MCF 10A (cell line): ENCODE measurements at regions of chr12 and their contacts with region 1.

Region 1: DNA sequence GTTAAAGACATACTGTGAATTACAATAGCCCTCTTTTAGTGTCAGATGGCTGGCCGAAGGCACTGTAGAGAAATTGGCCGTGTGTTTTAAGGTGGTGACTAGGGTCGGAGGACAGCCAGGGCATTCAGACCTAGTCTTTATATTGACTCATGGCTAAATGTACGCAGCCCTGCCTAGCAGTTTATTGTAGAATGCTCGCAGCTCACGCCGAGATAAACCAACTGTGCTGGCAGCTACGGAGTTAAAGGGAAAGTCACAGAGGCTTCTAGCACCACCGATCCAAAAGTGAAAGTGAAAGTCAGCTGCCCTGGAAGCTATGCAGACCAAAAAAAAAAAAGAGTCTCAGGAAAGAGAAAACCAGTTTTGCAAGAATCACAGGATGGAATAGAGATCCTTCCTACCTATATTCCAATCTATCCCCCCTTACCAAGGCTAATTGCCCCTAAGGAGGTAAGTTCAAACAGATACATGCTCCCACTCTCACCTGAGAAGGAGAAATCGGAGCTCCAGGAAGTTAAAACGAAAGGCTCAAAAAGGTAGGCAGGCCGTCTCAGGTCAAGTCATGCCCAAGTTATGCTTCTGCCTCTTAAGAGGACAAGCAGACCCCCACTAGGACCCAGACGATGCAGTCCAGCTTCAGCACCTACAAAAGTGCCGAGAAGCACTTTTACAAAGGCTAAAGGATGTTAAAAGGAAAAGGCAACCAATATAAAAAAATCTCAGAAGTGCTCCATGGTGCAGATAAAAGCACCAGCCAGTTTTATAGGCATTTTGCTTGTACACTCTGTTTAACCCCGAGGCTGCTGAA is 24.8 kb downstream of the KLRK1 start:
- DNase-seq: peak; percentile 83
- H3K4me3 Mint-ChIP-seq: no peak overlapping the region
- H3K27ac Mint-ChIP-seq: no peak overlapping the region
- H3K4me1 Mint-ChIP-seq: peaks cover 22% of the 10 kb centered on the region
- H3K27me3 Mint-ChIP-seq: no peaks in the 10 kb centered on the region
- CTCF ChIP-seq: no peak

Region 2: DNA sequence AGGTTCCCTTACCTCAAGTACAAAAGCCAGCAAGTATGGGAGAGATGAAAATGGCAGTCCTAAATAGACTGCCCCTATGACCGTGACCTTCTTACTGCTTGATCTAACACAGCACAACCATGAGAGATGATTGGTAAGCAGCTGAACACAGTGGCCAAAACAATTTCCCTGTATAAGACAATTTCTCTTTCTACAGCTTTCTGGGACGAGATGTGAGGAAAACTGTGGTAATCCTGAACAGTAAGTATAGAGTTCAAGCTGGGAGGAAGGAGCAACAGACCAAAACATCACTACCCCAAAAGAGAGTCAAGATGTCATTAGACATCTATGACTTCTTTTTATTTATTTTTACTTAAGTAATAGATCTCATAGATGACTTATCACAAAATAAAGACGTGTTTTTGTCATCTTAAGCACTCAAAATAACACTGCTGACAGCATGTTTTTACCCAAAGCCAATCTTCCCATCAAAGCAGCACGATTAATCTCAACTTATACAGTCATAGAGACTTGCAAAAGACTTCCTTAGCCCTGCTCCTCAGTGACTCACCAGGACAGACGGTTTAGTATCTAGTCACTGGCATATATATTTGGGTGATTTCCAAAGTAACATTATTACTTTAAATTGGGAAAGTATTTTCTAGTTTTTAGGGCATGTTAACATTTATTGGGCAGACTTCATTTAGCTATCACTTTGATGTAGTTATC is 182.5 kb before region 1 on chr12:
- CTCF ChIA-PET with region 1: no interaction called
- POLR2A ChIA-PET with region 1: no interaction called
- intact Hi-C with region 1: no loop called
- DNase-seq: peak; percentile 85
- H3K4me3 Mint-ChIP-seq: no peak overlapping the region
- H3K27ac Mint-ChIP-seq: no peak overlapping the region
- H3K4me1 Mint-ChIP-seq: peaks cover 15% of the 10 kb centered on the region
- H3K27me3 Mint-ChIP-seq: no peaks in the 10 kb centered on the region
- CTCF ChIP-seq: no peak

Region 3: DNA sequence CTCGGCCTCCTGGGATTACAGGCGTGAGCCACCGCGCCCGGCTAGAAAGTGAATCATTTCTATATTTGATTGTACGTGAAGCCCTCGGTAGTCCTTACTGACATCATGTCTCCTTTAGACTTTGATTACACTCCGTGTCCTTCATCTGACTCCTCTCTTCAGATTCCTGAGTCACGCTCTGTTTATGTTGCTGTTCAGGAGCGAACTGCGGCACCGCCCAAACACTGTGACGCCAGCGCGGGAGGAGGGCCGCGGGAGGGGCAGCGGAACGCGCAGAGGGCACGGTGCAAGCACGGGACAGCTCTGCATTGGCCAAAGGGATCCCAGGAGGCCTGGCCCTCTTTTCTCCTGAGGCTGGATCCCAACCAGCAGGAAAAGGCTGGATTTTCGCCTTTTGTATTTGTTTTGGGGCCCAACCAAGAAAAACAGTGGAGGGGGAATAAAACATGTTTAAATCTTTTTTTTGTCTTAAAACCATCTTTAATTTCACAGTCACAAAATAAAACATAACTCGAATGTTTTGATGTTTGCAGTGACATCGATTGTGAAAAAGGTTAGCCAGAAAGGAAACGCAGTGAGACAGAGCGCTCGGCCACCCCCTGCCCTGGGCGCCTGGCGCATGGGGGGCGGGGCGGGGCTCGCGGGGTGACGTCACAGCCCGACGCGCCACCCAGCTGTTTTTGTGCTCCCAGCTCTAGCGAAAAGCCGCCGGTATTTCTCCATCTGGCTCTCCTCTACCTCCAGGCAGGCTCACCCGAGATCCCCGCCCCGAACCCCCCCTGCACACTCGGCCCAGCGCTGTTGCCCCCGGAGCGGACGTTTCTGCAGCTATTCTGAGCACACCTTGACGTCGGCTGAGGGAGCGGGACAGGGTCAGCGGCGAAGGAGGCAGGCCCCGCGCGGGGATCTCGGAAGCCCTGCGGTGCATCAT is 152.6 kb before region 1 on chr12 and contains the start of gene GABARAPL1:
- CTCF ChIA-PET with region 1: no interaction called
- POLR2A ChIA-PET with region 1: interaction called, 38 read pairs
- intact Hi-C with region 1: no loop called
- DNase-seq: peak; percentile 98
- H3K4me3 Mint-ChIP-seq: peak within 1 kb of the TSS; percentile 88
- H3K27ac Mint-ChIP-seq: peak within 1 kb of the TSS; percentile 99
- H3K4me1 Mint-ChIP-seq: peaks cover 21% of the 10 kb centered on the region
- H3K27me3 Mint-ChIP-seq: no peaks in the 10 kb centered on the region
- CTCF ChIP-seq: no peak
- total RNA-seq, gene GABARAPL1: 19.7 and 28.1 TPM in 2 replicates

Region 4: DNA sequence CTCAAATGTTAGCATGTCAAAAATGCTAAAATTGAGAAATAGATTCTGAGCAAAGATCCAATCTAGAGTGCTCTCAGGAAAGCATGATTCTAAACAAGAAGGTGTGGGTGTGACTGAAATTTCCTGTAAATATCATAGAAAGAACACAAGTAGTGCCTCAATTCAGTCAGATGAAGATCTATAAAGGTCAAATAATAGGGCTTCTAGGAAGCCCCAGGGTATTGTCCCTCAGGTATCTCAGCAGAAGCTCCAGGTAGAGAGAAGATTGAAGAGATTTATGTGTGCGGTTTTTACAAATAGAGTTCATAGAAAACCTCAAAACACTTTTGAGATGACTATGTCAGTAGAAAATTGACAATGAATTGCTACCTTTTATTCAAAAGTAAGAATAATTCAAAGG is 44.4 kb before region 1 on chr12:
- CTCF ChIA-PET with region 1: no interaction called
- POLR2A ChIA-PET with region 1: no interaction called
- intact Hi-C with region 1: no loop called
- DNase-seq: no peak
- H3K4me3 Mint-ChIP-seq: no peak overlapping the region
- H3K27ac Mint-ChIP-seq: peak overlapping the region; percentile 43
- H3K4me1 Mint-ChIP-seq: peaks cover 4% of the 10 kb centered on the region
- H3K27me3 Mint-ChIP-seq: no peaks in the 10 kb centered on the region
- CTCF ChIP-seq: no peak

Region 5: DNA sequence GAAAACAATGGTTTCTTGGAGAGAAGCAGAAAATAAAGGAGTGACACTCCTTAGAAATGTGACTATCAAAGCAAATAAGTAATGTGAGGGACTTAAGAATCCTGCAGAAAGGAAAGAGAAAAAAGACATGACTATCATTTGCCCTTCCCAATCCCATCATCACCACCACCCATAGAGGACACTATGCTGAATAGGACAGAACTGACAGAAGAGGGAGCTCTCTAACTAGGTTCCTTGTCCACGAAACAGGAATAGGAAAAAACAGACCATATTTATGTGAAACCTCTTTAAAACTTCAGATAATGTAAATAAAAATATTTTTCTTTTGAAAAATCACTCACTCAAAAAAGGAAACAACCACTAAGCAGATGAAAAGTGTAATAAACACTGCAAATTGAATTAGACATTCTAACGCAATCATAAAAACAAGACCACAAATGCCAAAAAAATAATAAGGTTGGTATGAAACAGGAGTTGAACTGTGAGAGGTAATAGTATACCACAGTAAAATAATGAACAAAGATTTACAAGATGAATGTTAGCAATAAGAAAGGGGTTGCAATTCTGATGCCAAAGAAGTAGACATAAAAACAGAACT is 33.3 kb before region 1 on chr12:
- CTCF ChIA-PET with region 1: interaction called, 32 read pairs
- POLR2A ChIA-PET with region 1: interaction called, 4 read pairs
- intact Hi-C with region 1: loop called (anchors 1 kb)
- DNase-seq: peak; percentile 72
- H3K4me3 Mint-ChIP-seq: no peak overlapping the region
- H3K27ac Mint-ChIP-seq: no peak overlapping the region
- H3K4me1 Mint-ChIP-seq: peaks cover 22% of the 10 kb centered on the region
- H3K27me3 Mint-ChIP-seq: no peaks in the 10 kb centered on the region
- CTCF ChIP-seq: peak; percentile 63

Region 6: GRCh38 chr12:10354502-10354901 is 10.5 kb before region 1 on chr12:
- CTCF ChIA-PET with region 1: interaction called, 7 read pairs
- POLR2A ChIA-PET with region 1: interaction called, 10 read pairs
- intact Hi-C with region 1: no loop called
- DNase-seq: peak; percentile 63
- H3K4me3 Mint-ChIP-seq: no peak overlapping the region
- H3K27ac Mint-ChIP-seq: no peak overlapping the region
- H3K4me1 Mint-ChIP-seq: no peaks in the 10 kb centered on the region
- H3K27me3 Mint-ChIP-seq: no peaks in the 10 kb centered on the region
- CTCF ChIP-seq: no peak

Region 7: GRCh38 chr12:10395390-10395998 is 30.5 kb after region 1 on chr12:
- CTCF ChIA-PET with region 1: interaction called, 19 read pairs
- POLR2A ChIA-PET with region 1: interaction called, 135 read pairs
- intact Hi-C with region 1: loop called (anchors 2 kb)
- DNase-seq: peak; percentile 93
- H3K4me3 Mint-ChIP-seq: peak overlapping the region; percentile 68
- H3K27ac Mint-ChIP-seq: peak overlapping the region; percentile 99
- H3K4me1 Mint-ChIP-seq: peaks cover 31% of the 10 kb centered on the region
- H3K27me3 Mint-ChIP-seq: no peaks in the 10 kb centered on the region
- CTCF ChIP-seq: no peak

Region 8: GRCh38 chr12:10562306-10562933 is 197.4 kb after region 1 on chr12:
- CTCF ChIA-PET with region 1: interaction called, 26 read pairs
- POLR2A ChIA-PET with region 1: interaction called, 8 read pairs
- intact Hi-C with region 1: loop called (anchors 1 kb)
- DNase-seq: peak; percentile 61
- H3K4me3 Mint-ChIP-seq: no peak overlapping the region
- H3K27ac Mint-ChIP-seq: no peak overlapping the region
- H3K4me1 Mint-ChIP-seq: peaks cover 6% of the 10 kb centered on the region
- H3K27me3 Mint-ChIP-seq: no peaks in the 10 kb centered on the region
- CTCF ChIP-seq: peak; percentile 61

Region 9: GRCh38 chr12:10716704-10717315 is 351.8 kb after region 1 on chr12:
- CTCF ChIA-PET with region 1: no interaction called
- POLR2A ChIA-PET with region 1: interaction called, 15 read pairs
- intact Hi-C with region 1: no loop called
- DNase-seq: peak; percentile 97
- H3K4me3 Mint-ChIP-seq: peak overlapping the region; percentile 99
- H3K27ac Mint-ChIP-seq: peak overlapping the region; percentile 98
- H3K4me1 Mint-ChIP-seq: peaks cover 46% of the 10 kb centered on the region
- H3K27me3 Mint-ChIP-seq: no peaks in the 10 kb centered on the region
- CTCF ChIP-seq: no peak